ENCODE measurements at regions of chr5 and their contacts with region 1.

Region 1: GRCh38 chr5:122515709-122516431 is 203.8 kb downstream of the SNCAIP start:
- DNase-seq: peak; percentile 50 to 72 (median 63)
- H3K4me3 ChIP-seq: no peak overlapping the region
- H3K27ac ChIP-seq: no peak overlapping the region
- H3K4me1 ChIP-seq: peaks cover 2% of the 10 kb centered on the region
- H3K27me3 ChIP-seq: no peaks in the 10 kb centered on the region
- CTCF ChIP-seq: peak; percentile 52 to 80 (median 73)
- EP300 ChIP-seq: no peak
- POLR2A ChIP-seq: no peak

Region 2: GRCh38 chr5:123157791-123158581 is 642.1 kb after region 1 on chr5:
- intact Hi-C with region 1: loop called in 1 of 4 experiments (anchors 5 kb)
- DNase-seq: peak in 2 of 5 donors; percentile 36 to 39
- H3K4me3 ChIP-seq: no peak overlapping the region
- H3K27ac ChIP-seq: peak overlapping the region in 1 of 2 donors; percentile 52
- H3K4me1 ChIP-seq: peaks cover 11% of the 10 kb centered on the region
- H3K27me3 ChIP-seq: no peaks in the 10 kb centered on the region
- CTCF ChIP-seq: no peak
- EP300 ChIP-seq: no peak
- POLR2A ChIP-seq: no peak

Region 3: GRCh38 chr5:123367739-123368138 is 851.9 kb after region 1 on chr5:
- intact Hi-C with region 1: loop called in 1 of 4 experiments (anchors 10 kb)
- DNase-seq: no peak
- H3K4me3 ChIP-seq: no peak overlapping the region
- H3K27ac ChIP-seq: no peak overlapping the region
- H3K4me1 ChIP-seq: peaks cover 1% of the 10 kb centered on the region
- H3K27me3 ChIP-seq: no peaks in the 10 kb centered on the region
- CTCF ChIP-seq: peak in 1 of 3 donors; percentile 31
- EP300 ChIP-seq: no peak
- POLR2A ChIP-seq: no peak

Measured in ovary (tissue), 10 donors.